GM10248 (cell line): ENCODE measurements at regions of chr10 and their contacts with region 1.

Region 1: DNA sequence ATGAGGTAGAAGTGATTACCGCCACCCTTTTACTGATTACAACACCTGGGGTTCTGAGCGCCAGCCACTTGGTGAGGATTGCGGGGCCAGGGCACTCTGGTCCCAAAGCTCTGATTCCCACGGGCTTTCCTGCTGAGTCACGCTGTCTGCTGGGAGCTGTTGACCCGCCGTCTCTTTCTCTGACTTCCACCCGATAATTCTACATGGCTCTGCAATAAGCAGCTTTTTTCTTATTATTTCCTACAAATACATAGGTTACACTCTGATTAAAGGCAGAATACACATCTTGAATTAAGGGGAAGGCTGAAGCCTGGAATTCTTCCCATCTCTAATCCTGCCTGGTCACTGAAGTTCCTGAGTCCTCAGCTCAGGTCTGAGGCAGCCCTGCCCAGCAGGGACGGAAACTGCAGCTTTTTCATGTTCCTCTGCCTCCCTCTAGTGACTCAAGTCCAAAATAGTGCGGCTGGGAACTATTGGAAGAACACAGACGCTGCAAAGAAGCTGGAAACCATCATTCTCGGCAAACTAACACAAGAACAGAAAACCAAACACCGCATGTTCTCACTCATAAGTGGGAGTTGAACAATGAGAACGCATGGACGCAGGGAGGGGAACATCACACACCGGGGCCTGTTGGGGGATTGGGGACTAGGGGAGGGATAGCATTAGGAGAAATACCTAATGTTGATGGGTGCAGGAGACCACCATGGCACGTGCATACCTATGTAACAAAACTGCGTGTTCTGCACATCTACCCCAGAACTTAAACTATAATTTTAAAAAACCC is 178.3 kb downstream of the PRKCQ start:
- DNase-seq: peak; percentile 85
- CTCF ChIP-seq: peak; percentile 88

Region 2: GRCh38 chr10:6136215-6137201 is 265.2 kb before region 1 on chr10:
- CTCF ChIA-PET with region 1: interaction called, 15 read pairs
- POLR2A ChIA-PET with region 1: no interaction called
- DNase-seq: peak; percentile 78
- CTCF ChIP-seq: no peak

Region 3: GRCh38 chr10:6176691-6177231 is 225.0 kb before region 1 on chr10:
- CTCF ChIA-PET with region 1: interaction called, 10 read pairs
- POLR2A ChIA-PET with region 1: no interaction called
- DNase-seq: no peak
- CTCF ChIP-seq: no peak

Region 4: DNA sequence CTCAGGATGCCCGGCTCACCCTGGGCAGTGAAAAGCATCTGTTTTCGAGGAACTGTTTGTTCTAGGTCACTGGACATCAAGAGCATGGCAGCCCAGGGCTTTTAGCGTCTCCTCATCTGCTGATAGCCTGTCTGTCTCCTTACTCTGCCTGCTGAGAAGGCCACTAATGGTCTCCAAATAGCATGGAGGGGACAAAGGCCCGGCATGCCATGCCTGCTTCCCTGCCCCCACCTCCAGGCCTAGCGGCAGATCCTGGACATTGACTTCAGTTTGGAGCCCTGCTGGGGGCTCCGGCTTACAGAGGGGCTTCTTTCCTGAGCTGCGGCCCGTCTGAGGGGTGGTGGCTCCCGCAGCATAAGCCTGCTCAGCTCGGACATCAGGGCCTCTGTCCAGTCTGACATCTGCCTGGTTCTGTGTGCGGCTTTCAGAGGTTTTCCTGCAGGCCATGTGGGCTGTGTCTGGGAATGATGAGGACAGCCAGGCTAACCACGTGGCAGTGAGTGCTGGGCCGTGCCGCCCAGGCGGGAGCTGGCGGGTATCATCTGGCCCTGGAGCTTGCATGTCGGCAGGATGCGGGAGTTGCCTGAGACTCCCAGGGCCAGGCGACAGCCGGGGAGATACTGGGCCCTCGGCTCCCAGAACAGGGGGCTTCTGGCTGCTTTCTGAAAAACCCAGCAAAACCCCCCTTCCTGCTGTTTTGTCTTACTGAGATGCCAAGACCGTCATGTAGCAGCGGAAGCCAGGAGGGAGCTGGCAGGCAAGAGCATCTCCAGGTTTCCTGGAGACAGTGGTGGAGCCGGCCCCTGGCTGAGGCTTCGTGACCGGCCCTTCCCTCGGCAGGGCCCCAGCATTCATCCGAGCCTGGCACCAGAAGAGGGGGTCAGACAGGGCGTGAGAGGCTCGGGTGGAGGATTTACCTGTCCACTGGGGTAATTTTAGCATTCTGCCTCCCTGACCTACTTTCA is 189.8 kb before region 1 on chr10:
- CTCF ChIA-PET with region 1: interaction called, 20 read pairs
- POLR2A ChIA-PET with region 1: no interaction called
- DNase-seq: no peak
- CTCF ChIP-seq: no peak

Region 5: DNA sequence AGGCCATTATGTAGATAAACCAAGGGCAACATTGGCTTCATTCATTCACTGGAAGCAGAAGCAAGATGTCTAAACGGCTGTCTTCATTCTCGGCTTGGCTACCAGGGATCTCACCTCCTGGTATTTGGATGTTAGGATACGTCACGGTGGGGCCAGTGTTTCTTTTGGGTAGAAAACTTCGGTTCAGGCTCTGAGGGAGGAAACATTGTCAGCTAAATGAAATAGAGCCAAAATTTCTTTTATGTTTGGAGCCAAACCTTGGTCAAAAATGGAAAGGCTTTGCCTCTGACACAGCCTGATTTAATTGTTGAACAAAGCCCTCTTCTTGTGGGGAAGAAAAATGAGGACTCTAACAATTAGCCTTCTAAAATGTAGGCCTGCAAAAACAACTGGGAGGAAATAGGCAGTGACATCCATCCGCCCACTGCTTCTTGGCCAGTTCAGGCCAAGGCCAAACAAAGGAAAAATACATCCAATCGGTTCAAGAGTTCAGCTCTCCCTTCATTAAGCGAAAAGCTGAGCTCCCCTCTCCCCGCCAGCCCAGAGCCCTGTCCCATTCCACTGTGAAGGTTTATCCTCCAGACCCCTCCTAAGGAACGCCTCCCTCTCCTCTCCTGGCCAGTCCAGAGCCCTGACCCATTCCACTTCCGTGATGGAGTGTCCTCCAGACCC is 154.6 kb before region 1 on chr10:
- CTCF ChIA-PET with region 1: interaction called, 11 read pairs
- POLR2A ChIA-PET with region 1: no interaction called
- DNase-seq: no peak
- CTCF ChIP-seq: no peak

Region 6: GRCh38 chr10:6364893-6365292 is 36.9 kb before region 1 on chr10:
- CTCF ChIA-PET with region 1: interaction called, 14 read pairs
- POLR2A ChIA-PET with region 1: no interaction called
- DNase-seq: no peak
- CTCF ChIP-seq: no peak